PC-9 (cell line): ENCODE measurements at regions of chr2 and their contacts with region 1.

Region 1: DNA sequence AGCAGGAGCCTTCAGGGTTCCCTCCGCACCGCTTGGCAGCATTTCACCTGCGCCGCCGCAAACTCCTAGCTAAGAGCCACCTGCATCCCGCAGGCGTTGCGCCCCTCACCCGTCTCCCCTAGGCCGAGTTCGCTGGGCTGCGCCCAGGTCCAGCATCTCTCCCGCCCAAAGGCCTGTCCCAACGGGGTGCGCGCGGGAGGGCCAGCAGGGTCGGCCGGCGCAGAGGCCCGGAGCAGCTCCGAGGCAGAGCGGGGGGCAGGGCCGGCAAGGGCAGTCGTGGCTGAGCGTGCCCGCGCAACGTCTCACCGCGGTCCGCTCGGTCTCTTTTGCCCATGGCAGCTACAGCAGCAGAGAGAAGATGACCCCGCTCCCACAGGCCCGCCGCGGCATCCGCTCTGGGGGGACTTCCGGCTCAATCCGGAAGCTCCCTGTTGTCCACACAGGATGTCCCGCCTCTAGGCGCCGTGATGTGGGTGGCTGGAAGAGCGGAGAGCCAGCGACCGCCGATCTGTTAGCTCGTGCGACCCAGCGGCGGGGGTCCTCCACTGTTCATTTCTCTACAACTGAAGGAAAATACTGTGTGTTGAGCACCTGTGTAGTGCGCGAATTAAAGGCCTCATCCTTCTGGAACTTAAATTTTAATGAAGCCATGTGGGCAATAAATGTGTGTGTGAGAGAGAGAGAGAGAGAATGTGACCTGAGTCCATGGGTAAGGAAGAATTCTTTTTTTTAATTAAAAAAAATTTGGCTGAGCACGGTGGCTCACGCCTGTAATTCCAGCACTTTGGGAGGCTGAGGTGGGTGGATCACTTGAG is at the start of gene ERCC3:
- DNase-seq: peak; percentile 72 to 79
- H3K4me3 ChIP-seq: peak within 1 kb of the TSS; percentile 72
- H3K27ac ChIP-seq: peak within 1 kb of the TSS; percentile 68
- H3K4me1 ChIP-seq: peaks cover 16% of the 10 kb centered on the region
- H3K27me3 ChIP-seq: no peaks in the 10 kb centered on the region
- CTCF ChIP-seq: 0 out of 2 replicates have a peak, but pooled peaks have one; percentile 34
- total RNA-seq, gene ERCC3: 70.3 and 73.2 TPM in 2 replicates

Region 2: DNA sequence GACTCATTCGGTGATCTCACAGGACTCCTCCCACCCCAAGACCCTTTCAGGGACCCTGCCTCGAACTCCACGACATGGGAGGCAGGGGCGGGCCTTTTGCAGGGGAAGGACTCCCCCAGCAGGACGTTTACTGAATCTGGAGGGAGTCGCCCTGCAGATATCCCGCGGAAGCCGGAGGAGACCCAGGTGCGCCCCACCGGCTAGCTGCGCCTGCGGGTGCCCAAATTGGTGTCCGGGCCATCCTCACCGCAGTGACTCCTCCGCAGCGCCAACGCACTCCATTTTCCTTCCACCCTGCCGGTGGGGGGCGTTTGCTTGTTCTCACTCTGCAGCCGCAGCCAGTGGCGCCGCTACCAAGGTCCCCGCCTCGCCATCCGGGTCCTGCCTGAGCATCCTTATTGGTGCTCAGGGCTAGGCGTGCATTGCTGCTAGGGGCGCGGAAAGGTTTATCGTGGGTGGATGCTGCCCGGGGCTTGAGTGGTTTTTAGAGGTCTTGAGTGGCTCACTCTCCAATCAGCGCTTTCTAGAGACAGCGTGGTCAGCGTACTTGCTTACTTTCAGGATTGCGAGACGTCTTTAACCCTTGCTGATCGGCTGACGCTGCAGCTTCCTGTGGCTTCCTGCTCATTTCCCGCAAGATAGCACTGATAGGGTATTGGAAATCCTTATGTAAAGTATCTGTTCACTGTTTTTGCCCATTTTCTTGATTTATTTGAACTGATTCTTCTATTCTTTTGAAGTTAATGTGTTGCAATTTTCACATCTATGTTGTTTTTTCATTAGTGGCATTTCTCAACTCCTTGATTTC is 268.4 kb before region 1 on chr2:
- CTCF ChIA-PET with region 1: no interaction called
- POLR2A ChIA-PET with region 1: interaction called, 11 read pairs
- intact Hi-C with region 1: no loop called
- DNase-seq: no peak
- H3K4me3 ChIP-seq: no peak overlapping the region
- H3K27ac ChIP-seq: no peak overlapping the region
- H3K4me1 ChIP-seq: no peaks in the 10 kb centered on the region
- H3K27me3 ChIP-seq: peaks cover 4% of the 10 kb centered on the region; the same call in 1 of the 2 replicates
- CTCF ChIP-seq: no peak

Region 3: GRCh38 chr2:127049927-127050802 is 243.8 kb before region 1 on chr2:
- CTCF ChIA-PET with region 1: no interaction called
- POLR2A ChIA-PET with region 1: no interaction called
- intact Hi-C with region 1: no loop called
- DNase-seq: peak in 1 of 2 experiments; percentile 65
- H3K4me3 ChIP-seq: no peak overlapping the region
- H3K27ac ChIP-seq: no peak overlapping the region
- H3K4me1 ChIP-seq: no peaks in the 10 kb centered on the region
- H3K27me3 ChIP-seq: no peaks in the 10 kb centered on the region
- CTCF ChIP-seq: peak; percentile 99

Region 4: DNA sequence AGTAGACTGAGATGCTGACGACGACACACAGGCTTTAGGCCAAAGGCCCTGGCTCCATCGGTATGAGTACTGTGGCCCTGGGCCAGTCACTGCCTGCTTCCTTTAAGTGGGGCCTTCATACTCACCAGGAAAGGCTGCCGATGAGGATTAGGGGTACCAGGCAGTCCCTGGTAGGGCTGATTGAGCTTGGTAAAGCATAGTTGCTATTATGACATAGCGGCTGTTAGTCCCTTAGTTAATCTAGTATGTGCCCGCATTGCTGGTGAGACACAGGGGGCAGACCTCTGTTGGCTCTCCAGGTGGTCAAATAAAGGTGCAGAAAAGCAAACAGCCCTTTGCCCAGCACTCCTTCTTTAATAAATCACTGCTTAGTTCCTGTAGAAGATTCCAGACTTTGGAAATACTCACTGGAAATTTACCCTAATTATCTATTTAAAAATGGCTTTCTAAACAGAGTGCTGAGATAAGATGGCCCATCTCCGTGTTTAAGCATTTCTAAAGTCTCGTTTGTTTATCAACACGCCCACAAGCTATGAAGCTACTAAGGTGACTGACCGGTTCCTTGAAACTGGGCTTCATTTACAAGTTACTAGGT is 178.4 kb before region 1 on chr2:
- CTCF ChIA-PET with region 1: no interaction called
- POLR2A ChIA-PET with region 1: no interaction called
- intact Hi-C with region 1: no loop called
- DNase-seq: no peak
- H3K4me3 ChIP-seq: no peak overlapping the region
- H3K27ac ChIP-seq: no peak overlapping the region
- H3K4me1 ChIP-seq: no peaks in the 10 kb centered on the region
- H3K27me3 ChIP-seq: no peaks in the 10 kb centered on the region
- CTCF ChIP-seq: no peak

Region 5: GRCh38 chr2:127197475-127198385 is 96.2 kb before region 1 on chr2:
- CTCF ChIA-PET with region 1: interaction called, 4 read pairs
- POLR2A ChIA-PET with region 1: interaction called, 4 read pairs
- intact Hi-C with region 1: loop called (anchors 1 kb)
- DNase-seq: peak; percentile 71 to 83
- H3K4me3 ChIP-seq: no peak overlapping the region
- H3K27ac ChIP-seq: no peak overlapping the region
- H3K4me1 ChIP-seq: no peaks in the 10 kb centered on the region
- H3K27me3 ChIP-seq: no peaks in the 10 kb centered on the region
- CTCF ChIP-seq: peak; percentile 88

Region 6: DNA sequence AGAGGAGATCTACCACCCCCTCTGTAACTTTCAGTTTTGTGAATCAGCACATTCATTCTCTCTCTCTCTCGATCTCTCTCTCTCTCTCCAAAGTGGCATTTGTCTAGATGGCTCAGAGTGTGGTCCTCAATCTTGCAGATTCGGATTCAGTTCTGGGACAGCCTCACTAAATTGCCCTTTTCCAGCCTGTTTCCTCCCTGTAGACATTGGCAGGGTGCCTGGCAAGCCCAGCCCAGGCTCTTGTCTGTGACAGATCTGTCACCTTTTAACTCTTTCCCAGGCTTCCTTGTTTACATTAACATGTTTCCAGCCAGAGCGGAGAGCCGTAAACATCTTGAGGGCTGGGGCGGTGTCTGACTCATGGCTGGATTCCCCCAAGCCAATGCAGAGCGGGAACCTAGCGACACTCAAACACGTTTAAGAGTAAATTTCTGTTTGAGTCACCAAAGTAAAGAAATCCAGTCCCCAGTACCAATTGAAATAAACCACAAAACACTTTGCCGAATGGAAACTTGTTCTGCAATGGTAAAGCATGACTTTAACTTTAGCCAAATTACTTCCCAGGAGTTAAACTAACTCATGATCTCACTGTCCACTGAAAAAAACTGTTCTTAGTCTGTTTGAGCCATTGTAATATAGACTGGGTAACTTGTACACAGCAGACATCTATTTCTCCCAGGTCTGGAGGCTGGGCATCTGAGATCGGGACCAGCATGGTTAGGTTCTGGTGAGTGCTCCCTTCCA is 67.3 kb before region 1 on chr2:
- CTCF ChIA-PET with region 1: no interaction called
- POLR2A ChIA-PET with region 1: no interaction called
- intact Hi-C with region 1: loop called (anchors 2 kb)
- DNase-seq: peak; percentile 94 to 100
- H3K4me3 ChIP-seq: no peak overlapping the region
- H3K27ac ChIP-seq: peak overlapping the region; percentile 88
- H3K4me1 ChIP-seq: peaks cover 50% of the 10 kb centered on the region
- H3K27me3 ChIP-seq: no peaks in the 10 kb centered on the region
- CTCF ChIP-seq: no peak

Region 7: GRCh38 chr2:127342101-127342500 is 48.1 kb after region 1 on chr2:
- CTCF ChIA-PET with region 1: no interaction called
- POLR2A ChIA-PET with region 1: no interaction called
- intact Hi-C with region 1: no loop called
- DNase-seq: no peak
- H3K4me3 ChIP-seq: no peak overlapping the region
- H3K27ac ChIP-seq: no peak overlapping the region
- H3K4me1 ChIP-seq: no peaks in the 10 kb centered on the region
- H3K27me3 ChIP-seq: no peaks in the 10 kb centered on the region
- CTCF ChIP-seq: no peak

Region 8: GRCh38 chr2:127526149-127527000 is 232.4 kb after region 1 on chr2 and contains the start of gene IWS1:
- CTCF ChIA-PET with region 1: no interaction called
- POLR2A ChIA-PET with region 1: interaction called, 11 read pairs
- intact Hi-C with region 1: no loop called
- DNase-seq: peak; percentile 95
- H3K4me3 ChIP-seq: peak within 1 kb of the TSS; percentile 88
- H3K27ac ChIP-seq: peak within 1 kb of the TSS; percentile 97
- H3K4me1 ChIP-seq: peaks cover 43% of the 10 kb centered on the region
- H3K27me3 ChIP-seq: no peaks in the 10 kb centered on the region
- CTCF ChIP-seq: no peak; the same call in 1 of the 2 replicates
- total RNA-seq, gene IWS1: 47.3 and 51.3 TPM in 2 replicates